Activated CD4-positive, alpha-beta memory T cell treated with anti-CD3 and anti-CD28 coated beads, Interleukin-2, amount 10 ng/mL, durations not matched to agents 7 days and 5 days (primary cell): ENCODE measurements at regions of chr1 and their contacts with region 1.

Region 1: GRCh38 chr1:226062558-226063223 is at the start of gene H3-3A:
- DNase-seq: peak; percentile 98
- H3K4me3 Mint-ChIP-seq: peak within 1 kb of the TSS; percentile 99
- H3K27ac Mint-ChIP-seq: peak within 1 kb of the TSS; percentile 100
- H3K4me1 Mint-ChIP-seq: peaks cover 41% of the 10 kb centered on the region
- H3K27me3 Mint-ChIP-seq: no peaks in the 10 kb centered on the region
- total RNA-seq, gene H3-3A: 480 to 486 TPM

Region 2: DNA sequence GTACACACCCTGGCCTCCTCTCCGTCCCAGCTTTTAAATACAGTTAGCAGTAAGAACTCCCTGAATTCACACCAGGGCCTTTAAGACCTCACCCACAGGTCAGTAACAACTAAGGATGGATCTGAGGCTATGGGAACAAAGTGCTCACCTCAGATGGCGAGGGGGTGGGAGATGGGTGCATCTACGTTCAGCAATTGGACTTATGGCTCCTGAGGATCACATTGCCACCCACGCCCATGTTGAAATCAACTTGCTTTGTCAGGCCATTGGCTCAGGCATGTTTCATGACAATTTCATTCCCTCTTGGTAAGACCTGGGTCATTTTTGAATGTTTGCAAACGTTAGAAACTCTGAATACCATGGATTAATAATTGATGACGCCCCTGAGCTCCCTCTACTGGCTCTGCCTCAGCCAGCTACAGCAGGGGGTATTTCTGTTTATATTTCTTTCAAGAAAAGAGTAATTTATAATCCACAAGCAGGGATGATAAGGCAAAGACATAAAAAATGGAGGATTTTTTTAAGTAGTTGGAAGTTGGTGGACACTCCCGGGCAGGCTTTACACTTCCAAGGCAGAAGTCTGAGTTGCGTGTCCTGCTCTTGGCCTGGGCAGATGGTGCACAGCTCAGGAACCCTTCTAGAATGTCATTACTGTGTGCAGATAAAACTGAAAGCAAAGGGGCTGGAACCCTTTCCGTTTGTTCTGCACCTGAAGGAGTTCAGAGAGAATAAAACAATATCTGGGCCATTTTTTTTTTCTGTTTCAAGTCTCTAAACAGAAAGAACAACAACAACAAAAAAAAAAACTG is 621.2 kb before region 1 on chr1:
- CTCF ChIA-PET with region 1: interaction called, 3 read pairs
- POLR2A ChIA-PET with region 1: interaction called, 21 read pairs
- DNase-seq: no peak
- H3K4me3 Mint-ChIP-seq: peak overlapping the region; percentile 38
- H3K27ac Mint-ChIP-seq: peak overlapping the region; percentile 71
- H3K4me1 Mint-ChIP-seq: peaks cover 56% of the 10 kb centered on the region
- H3K27me3 Mint-ChIP-seq: no peaks in the 10 kb centered on the region

Region 3: DNA sequence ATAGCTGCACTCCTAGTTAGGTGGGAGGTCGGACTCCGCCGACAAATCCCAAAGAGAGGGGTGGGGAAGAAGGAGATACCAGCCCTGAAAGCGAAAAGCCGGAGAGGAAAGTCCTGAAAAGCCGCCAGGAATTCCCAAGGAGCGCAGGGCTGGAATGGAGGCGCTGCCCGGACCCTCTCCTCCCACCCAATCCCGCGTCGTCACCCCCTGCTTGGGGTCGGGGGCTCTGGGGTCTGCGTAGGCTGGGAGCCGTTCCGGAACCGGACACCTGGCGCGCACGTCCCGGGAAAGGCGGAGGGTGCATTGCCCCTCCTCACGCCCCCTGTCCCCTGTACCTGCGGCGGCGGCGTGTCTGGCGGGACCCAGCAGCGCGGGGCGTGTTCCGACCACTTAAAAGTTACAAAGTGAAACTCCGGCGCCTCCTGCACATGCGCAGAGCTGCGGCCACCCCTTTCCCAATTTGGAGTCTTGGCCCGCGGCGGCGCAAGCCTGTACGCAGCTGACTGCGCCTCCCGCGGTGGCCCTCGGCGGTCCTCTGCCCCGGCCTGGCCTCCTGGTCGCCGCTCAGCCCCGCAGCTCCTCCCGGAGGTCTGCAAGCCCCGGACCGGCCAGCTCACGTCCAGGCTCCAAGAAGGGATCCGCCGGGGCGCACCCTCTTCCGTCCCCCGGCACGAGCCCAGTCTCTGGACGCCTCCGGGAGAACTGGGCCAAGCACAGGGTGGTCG is 180.6 kb before region 1 on chr1 and contains the start of gene TMEM63A:
- CTCF ChIA-PET with region 1: interaction called, 3 read pairs
- POLR2A ChIA-PET with region 1: interaction called, 14 read pairs
- DNase-seq: peak; percentile 90
- H3K4me3 Mint-ChIP-seq: peak within 1 kb of the TSS; percentile 89
- H3K27ac Mint-ChIP-seq: peak within 1 kb of the TSS; percentile 88
- H3K4me1 Mint-ChIP-seq: peaks cover 50% of the 10 kb centered on the region
- H3K27me3 Mint-ChIP-seq: peaks cover 9% of the 10 kb centered on the region
- total RNA-seq, gene TMEM63A: 126 to 127 TPM

Region 4: GRCh38 chr1:225999227-225999911 is 63.3 kb before region 1 on chr1 and contains the start of gene SDE2:
- CTCF ChIA-PET with region 1: interaction called, 23 read pairs
- POLR2A ChIA-PET with region 1: interaction called, 219 read pairs
- DNase-seq: peak; percentile 100
- H3K4me3 Mint-ChIP-seq: peak within 1 kb of the TSS; percentile 100
- H3K27ac Mint-ChIP-seq: peak within 1 kb of the TSS; percentile 100
- H3K4me1 Mint-ChIP-seq: peaks cover 71% of the 10 kb centered on the region
- H3K27me3 Mint-ChIP-seq: no peaks in the 10 kb centered on the region
- total RNA-seq, gene SDE2: 19.8 to 20.1 TPM

Region 5: DNA sequence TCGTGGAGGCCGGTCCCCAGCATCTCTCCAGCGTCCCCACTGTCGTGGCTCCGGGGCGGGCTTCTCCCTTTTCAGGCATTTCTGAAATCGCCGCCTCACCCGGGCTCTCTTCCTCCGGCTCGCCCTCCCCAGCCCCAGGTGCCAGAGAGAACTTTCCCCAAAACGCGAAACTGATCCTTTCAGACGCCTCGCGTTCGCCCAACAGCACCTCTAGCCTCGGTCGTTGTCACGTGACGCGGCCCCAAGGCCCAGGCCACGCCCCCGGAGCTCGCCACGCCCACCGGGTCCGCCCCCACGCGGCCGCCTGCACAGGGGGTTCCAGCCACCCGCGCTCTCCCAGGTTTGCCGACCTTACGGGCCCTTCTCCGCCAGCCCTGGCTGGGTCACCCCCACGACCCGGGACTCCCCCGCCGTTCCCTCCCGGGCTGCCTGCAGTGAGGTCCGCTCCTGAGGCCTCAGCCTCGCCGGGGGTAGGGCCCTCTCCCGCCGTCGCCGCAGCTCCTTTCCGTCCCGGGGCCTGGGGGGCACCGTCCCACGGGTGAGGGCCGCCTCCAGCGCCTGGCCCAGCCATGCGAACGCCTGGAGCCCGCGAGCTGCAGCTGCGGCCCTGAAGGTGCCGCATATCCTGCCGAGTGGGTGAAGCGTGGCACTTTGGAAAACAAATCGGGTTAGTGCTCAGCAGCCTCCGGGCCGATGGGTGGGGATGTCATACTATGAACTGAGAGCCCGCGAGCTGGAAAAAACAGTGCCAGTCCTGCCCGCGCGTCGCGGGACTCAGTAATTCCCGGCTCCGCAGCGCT is 20.8 kb after region 1 on chr1:
- CTCF ChIA-PET with region 1: interaction called, 37 read pairs
- POLR2A ChIA-PET with region 1: interaction called, 23 read pairs
- DNase-seq: peak; percentile 91
- H3K4me3 Mint-ChIP-seq: peak overlapping the region; percentile 93
- H3K27ac Mint-ChIP-seq: peak overlapping the region; percentile 54
- H3K4me1 Mint-ChIP-seq: peaks cover 8% of the 10 kb centered on the region
- H3K27me3 Mint-ChIP-seq: peaks cover 6% of the 10 kb centered on the region

Region 6: GRCh38 chr1:226121587-226122400 is 59.1 kb after region 1 on chr1:
- CTCF ChIA-PET with region 1: interaction called, 28 read pairs
- POLR2A ChIA-PET with region 1: interaction called, 29 read pairs
- DNase-seq: peak; percentile 79
- H3K4me3 Mint-ChIP-seq: peak overlapping the region; percentile 69
- H3K27ac Mint-ChIP-seq: peak overlapping the region; percentile 84
- H3K4me1 Mint-ChIP-seq: peaks cover 46% of the 10 kb centered on the region
- H3K27me3 Mint-ChIP-seq: peaks cover 4% of the 10 kb centered on the region

Region 7: DNA sequence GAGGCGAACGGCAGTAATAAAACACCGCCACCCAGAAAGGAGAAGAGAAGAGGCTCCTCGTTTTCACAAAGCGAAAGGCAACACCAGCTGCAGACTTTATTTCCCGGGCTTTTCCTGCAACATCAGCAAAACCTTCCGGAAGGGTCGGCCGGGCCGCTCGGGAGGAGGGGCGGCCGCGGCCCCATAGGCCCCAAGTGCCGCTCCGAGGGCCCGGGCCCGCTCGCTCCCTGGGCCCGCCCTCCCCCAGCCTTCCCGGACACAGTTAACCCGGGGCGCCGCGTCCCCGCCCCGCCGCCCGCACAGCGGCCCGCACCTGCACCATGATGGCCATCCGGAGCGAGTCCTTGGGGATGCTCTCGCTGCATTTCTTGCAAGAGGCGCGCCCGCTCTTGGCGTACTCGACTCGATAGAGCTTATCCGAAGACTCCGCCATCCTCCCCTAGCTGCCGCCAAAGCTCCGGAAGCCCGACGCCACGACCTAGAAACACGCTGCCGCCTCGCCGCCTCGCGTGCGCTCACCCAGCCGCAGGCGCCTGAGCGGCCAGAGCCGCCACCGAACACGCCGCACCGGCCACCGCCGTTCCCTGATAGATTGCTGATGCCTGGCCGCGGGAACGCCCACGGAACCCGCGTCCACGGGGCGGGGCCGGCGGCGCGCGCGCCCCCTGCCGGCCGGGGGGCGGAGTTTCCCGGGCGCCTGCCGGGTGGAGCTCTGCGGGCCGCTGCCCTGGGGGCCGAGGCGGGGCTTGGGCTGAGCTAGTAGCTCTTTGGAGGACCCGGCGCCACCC is 345.0 kb after region 1 on chr1 and contains the start of gene PARP1:
- CTCF ChIA-PET with region 1: interaction called, 8 read pairs
- POLR2A ChIA-PET with region 1: interaction called, 27 read pairs
- DNase-seq: peak; percentile 92
- H3K4me3 Mint-ChIP-seq: peak within 1 kb of the TSS; percentile 85
- H3K27ac Mint-ChIP-seq: peak within 1 kb of the TSS; percentile 89
- H3K4me1 Mint-ChIP-seq: peaks cover 35% of the 10 kb centered on the region
- H3K27me3 Mint-ChIP-seq: peaks cover 2% of the 10 kb centered on the region
- total RNA-seq, gene PARP1: 191 to 194 TPM